Naive thymus-derived CD4-positive, alpha-beta T cell (primary cell): ENCODE measurements at regions of chr4 and their contacts with region 1.

Region 1: GRCh38 chr4:83252782-83253405 is 31.7 kb downstream of the COQ2 start:
- DNase-seq: peak; percentile 36 to 85 (median 79)
- ATAC-seq: peak; percentile 90
- H3K4me3 ChIP-seq: no peak overlapping the region
- H3K4me3 Mint-ChIP-seq: no peak overlapping the region
- H3K27ac ChIP-seq: no peak overlapping the region
- H3K27ac Mint-ChIP-seq: peak overlapping the region in 8 of 9 donors; percentile 8 to 88 (median 72)
- H3K4me1 ChIP-seq: peaks cover 10 to 12% of the 10 kb centered on the region in 2 donors
- H3K4me1 Mint-ChIP-seq: peaks cover 19 to 36% (median 26%) of the 10 kb centered on the region in 7 donors
- H3K27me3 ChIP-seq: no peaks in the 10 kb centered on the region
- H3K27me3 Mint-ChIP-seq: peaks cover 0 to 5% (median 0%) of the 10 kb centered on the region in 5 donors

Region 2: GRCh38 chr4:82398263-82398662 is 854.6 kb before region 1 on chr4:
- CTCF ChIA-PET with region 1: no interaction called
- POLR2A ChIA-PET with region 1: no interaction called
- intact Hi-C with region 1: no loop called
- DNase-seq: no peak
- ATAC-seq: no peak
- H3K4me3 ChIP-seq: no peak overlapping the region
- H3K4me3 Mint-ChIP-seq: no peak overlapping the region
- H3K27ac ChIP-seq: no peak overlapping the region
- H3K27ac Mint-ChIP-seq: no peak overlapping the region
- H3K4me1 ChIP-seq: no peaks in the 10 kb centered on the region
- H3K4me1 Mint-ChIP-seq: peaks cover 0 to 3% (median 0%) of the 10 kb centered on the region in 7 donors
- H3K27me3 ChIP-seq: no peaks in the 10 kb centered on the region
- H3K27me3 Mint-ChIP-seq: peaks cover 0 to 23% (median 4%) of the 10 kb centered on the region in 5 donors

Region 3: DNA sequence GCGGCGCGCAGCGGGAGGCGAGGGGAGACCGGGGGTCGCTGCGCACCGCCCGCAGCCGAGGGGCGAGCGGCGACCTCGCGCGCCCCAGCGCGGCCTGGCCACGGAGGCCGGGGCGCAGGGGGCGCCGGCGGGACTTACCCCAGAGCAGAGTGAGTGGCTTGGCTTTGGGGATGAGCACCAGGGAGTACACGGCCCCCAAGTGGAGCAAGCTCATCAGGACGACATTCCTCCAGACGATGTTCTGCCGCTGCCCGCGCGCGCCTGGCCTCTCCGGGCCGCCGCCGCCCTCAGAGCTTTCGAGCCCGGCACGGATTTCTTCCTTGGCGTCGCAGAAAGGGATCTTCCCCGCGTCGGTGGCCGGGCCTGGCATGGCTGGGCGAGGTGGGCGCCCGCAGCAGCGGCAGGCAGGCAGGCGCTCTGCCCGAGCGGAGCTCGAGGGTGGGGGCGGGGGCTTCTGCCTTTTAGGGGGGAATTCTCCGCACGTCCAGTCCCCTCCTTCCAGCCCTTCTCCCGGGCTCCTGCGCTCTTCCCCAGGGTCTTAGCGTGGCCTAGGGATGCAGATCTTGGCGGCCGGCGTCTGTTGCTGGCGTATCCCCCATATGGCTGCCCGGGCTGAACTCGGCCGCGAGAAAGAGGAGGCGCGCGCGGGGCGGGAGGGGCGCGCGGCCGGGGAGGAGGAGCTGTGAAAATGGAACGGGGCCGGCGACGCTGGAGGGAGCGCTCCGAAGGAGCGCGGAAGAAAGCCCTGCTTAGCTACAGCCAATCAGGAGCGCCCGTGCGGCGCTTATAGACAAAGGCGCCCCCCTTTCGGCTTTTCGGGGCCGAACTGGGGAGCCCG is 454.5 kb before region 1 on chr4 and contains the start of gene SCD5:
- CTCF ChIA-PET with region 1: no interaction called
- POLR2A ChIA-PET with region 1: no interaction called
- intact Hi-C with region 1: no loop called
- DNase-seq: peak in 4 of 9 donors; percentile 4 to 52 (median 20)
- ATAC-seq: peak; percentile 90
- H3K4me3 ChIP-seq: peak within 1 kb of the TSS; percentile 50
- H3K4me3 Mint-ChIP-seq: peak within 1 kb of the TSS; percentile 72 to 92 (median 84)
- H3K27ac ChIP-seq: no peak within 1 kb of the TSS
- H3K27ac Mint-ChIP-seq: peak within 1 kb of the TSS in 1 of 9 donors; percentile 23
- H3K4me1 ChIP-seq: peaks cover 0 to 11% of the 10 kb centered on the region in 2 donors
- H3K4me1 Mint-ChIP-seq: peaks cover 13 to 25% (median 20%) of the 10 kb centered on the region in 7 donors
- H3K27me3 ChIP-seq: peaks cover 0 to 7% of the 10 kb centered on the region in 2 donors
- H3K27me3 Mint-ChIP-seq: peaks cover 38 to 78% (median 53%) of the 10 kb centered on the region in 5 donors
- total RNA-seq, gene SCD5: 0.13 to 1.5 (median 0.44) TPM in 3 of 5 experiments, not detected in the others

Region 4: DNA sequence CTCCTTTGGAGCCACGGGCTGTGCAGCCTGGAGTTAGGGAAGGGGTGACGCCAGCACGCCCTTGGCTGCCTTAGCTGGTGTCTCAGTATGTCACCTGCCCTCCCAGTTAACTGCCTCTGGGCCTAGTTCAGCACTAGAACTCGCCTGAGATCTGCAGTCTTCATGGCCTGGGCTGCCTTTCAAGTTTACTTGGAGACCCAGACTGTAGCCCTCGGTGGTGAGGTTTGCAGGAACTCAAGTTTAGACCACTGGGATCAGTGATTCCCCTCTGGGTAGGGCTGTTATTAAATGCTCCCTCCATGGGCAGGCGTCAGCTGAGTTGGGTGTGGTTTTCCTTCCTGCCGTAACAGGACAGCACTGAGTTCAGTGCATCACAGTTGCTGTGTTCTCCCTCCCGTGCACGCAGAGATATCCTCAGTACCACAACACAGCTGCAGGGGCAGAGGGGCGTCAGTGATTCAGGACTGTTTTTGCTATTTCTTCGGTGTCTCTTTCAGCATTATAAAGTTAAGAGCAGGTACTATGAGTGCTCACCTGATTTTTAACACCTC is 168.9 kb before region 1 on chr4:
- CTCF ChIA-PET with region 1: interaction called, 4 read pairs
- POLR2A ChIA-PET with region 1: interaction called, 12 read pairs
- intact Hi-C with region 1: loop called in 1 of 2 experiments (anchors 2 kb)
- DNase-seq: peak; percentile 36 to 86 (median 77)
- ATAC-seq: peak; percentile 98
- H3K4me3 ChIP-seq: no peak overlapping the region
- H3K4me3 Mint-ChIP-seq: peak overlapping the region; percentile 43 to 74 (median 62)
- H3K27ac ChIP-seq: peak overlapping the region; percentile 70
- H3K27ac Mint-ChIP-seq: peak overlapping the region; percentile 88 to 99 (median 94)
- H3K4me1 ChIP-seq: peaks cover 12 to 29% of the 10 kb centered on the region in 2 donors
- H3K4me1 Mint-ChIP-seq: peaks cover 25 to 55% (median 43%) of the 10 kb centered on the region in 7 donors
- H3K27me3 ChIP-seq: no peaks in the 10 kb centered on the region
- H3K27me3 Mint-ChIP-seq: no peaks in the 10 kb centered on the region

Region 5: DNA sequence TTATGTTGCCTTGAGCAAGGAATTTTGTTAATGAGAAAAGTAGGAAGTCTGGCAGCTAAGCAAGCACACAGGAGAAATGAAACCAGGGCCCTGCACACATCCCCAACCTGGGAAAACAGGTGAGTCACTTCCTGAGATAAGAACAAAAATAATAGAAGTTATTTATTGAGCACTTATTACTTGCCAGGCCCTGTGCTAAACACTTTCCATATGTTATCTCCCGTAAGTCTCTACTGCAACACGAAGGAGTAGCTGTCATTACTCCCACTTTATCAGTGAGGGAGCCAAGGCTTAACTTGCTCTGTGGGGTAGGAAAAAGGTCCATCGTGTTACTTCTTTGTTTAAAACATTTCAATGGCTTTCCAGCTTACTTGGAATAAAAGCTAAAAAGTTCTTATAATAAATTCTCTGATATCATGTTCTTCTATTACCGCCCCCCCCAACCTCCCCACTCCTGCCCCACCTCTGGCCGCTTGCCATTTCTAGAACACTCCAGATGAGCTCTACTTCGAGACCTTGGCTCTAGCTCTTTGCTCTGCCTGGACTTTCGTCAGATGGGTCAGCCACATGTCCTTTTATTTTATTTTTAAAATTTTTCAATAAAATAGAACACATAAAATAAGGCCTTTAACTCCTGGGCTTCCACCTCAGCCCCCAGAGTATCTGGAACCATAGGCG is 102.1 kb before region 1 on chr4:
- CTCF ChIA-PET with region 1: interaction called, 3 read pairs
- POLR2A ChIA-PET with region 1: interaction called, 4 read pairs
- intact Hi-C with region 1: loop called in 1 of 2 experiments (anchors 2 kb)
- DNase-seq: no peak
- ATAC-seq: no peak
- H3K4me3 ChIP-seq: no peak overlapping the region
- H3K4me3 Mint-ChIP-seq: no peak overlapping the region
- H3K27ac ChIP-seq: no peak overlapping the region
- H3K27ac Mint-ChIP-seq: no peak overlapping the region
- H3K4me1 ChIP-seq: peaks cover 0 to 10% of the 10 kb centered on the region in 2 donors
- H3K4me1 Mint-ChIP-seq: peaks cover 9 to 44% (median 30%) of the 10 kb centered on the region in 7 donors
- H3K27me3 ChIP-seq: no peaks in the 10 kb centered on the region
- H3K27me3 Mint-ChIP-seq: peaks cover 0 to 17% (median 0%) of the 10 kb centered on the region in 5 donors

Region 6: GRCh38 chr4:83212041-83212851 is 40.6 kb before region 1 on chr4:
- CTCF ChIA-PET with region 1: interaction called, 15 read pairs
- POLR2A ChIA-PET with region 1: interaction called, 18 read pairs
- intact Hi-C with region 1: loop called (anchors 1 kb)
- DNase-seq: peak in 7 of 9 donors; percentile 72 to 96 (median 90)
- ATAC-seq: peak; percentile 95
- H3K4me3 ChIP-seq: peak overlapping the region; percentile 38
- H3K4me3 Mint-ChIP-seq: peak overlapping the region; percentile 49 to 90 (median 68)
- H3K27ac ChIP-seq: peak overlapping the region; percentile 67
- H3K27ac Mint-ChIP-seq: peak overlapping the region; percentile 83 to 99 (median 92)
- H3K4me1 ChIP-seq: peaks cover 67 to 69% of the 10 kb centered on the region in 2 donors
- H3K4me1 Mint-ChIP-seq: peaks cover 55 to 84% (median 79%) of the 10 kb centered on the region in 7 donors
- H3K27me3 ChIP-seq: no peaks in the 10 kb centered on the region
- H3K27me3 Mint-ChIP-seq: peaks cover 0 to 17% (median 0%) of the 10 kb centered on the region in 5 donors

Region 7: GRCh38 chr4:83231620-83232076 is 21.2 kb before region 1 on chr4:
- CTCF ChIA-PET with region 1: interaction called, 3 read pairs
- POLR2A ChIA-PET with region 1: no interaction called
- intact Hi-C with region 1: loop called (anchors 1 to 2 kb)
- DNase-seq: no peak
- ATAC-seq: peak; percentile 78
- H3K4me3 ChIP-seq: no peak overlapping the region
- H3K4me3 Mint-ChIP-seq: peak overlapping the region in 7 of 10 donors; percentile 13 to 60 (median 45)
- H3K27ac ChIP-seq: no peak overlapping the region
- H3K27ac Mint-ChIP-seq: peak overlapping the region; percentile 50 to 86 (median 72)
- H3K4me1 ChIP-seq: peaks cover 29 to 34% of the 10 kb centered on the region in 2 donors
- H3K4me1 Mint-ChIP-seq: peaks cover 44 to 62% (median 49%) of the 10 kb centered on the region in 7 donors
- H3K27me3 ChIP-seq: no peaks in the 10 kb centered on the region
- H3K27me3 Mint-ChIP-seq: peaks cover 0 to 32% (median 0%) of the 10 kb centered on the region in 5 donors

Region 8: GRCh38 chr4:83237591-83237990 is 15.3 kb before region 1 on chr4:
- CTCF ChIA-PET with region 1: interaction called, 6 read pairs
- POLR2A ChIA-PET with region 1: interaction called, 4 read pairs
- intact Hi-C with region 1: loop called (anchors 1 to 2 kb)
- DNase-seq: no peak
- ATAC-seq: no peak
- H3K4me3 ChIP-seq: no peak overlapping the region
- H3K4me3 Mint-ChIP-seq: no peak overlapping the region
- H3K27ac ChIP-seq: no peak overlapping the region
- H3K27ac Mint-ChIP-seq: peak overlapping the region in 1 of 9 donors; percentile 32
- H3K4me1 ChIP-seq: peaks cover 22 to 29% of the 10 kb centered on the region in 2 donors
- H3K4me1 Mint-ChIP-seq: peaks cover 40 to 70% (median 63%) of the 10 kb centered on the region in 7 donors
- H3K27me3 ChIP-seq: no peaks in the 10 kb centered on the region
- H3K27me3 Mint-ChIP-seq: peaks cover 0 to 57% (median 0%) of the 10 kb centered on the region in 5 donors

Region 9: DNA sequence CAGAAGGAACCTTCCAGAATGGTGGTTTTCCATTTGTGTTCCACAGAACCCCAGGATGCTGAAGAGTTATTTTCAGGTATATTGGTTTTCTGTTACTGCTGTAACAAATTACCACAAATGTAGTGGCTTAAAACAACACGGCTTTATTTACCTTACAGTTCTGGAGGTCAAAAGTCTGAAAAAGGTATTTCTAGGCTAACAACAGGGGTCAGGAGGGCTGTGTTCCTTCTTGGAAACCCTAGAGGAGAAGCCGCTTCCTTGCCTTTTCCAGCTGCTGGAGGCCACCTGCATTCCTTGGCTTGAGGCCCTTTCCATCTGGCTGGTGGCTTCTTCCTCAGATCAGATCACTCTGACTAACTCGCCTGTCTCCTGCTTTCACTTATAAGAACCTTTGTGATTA is 139.7 kb after region 1 on chr4:
- CTCF ChIA-PET with region 1: no interaction called
- POLR2A ChIA-PET with region 1: no interaction called
- intact Hi-C with region 1: no loop called
- DNase-seq: no peak
- ATAC-seq: no peak
- H3K4me3 ChIP-seq: no peak overlapping the region
- H3K4me3 Mint-ChIP-seq: no peak overlapping the region
- H3K27ac ChIP-seq: no peak overlapping the region
- H3K27ac Mint-ChIP-seq: no peak overlapping the region
- H3K4me1 ChIP-seq: peaks cover 0 to 11% of the 10 kb centered on the region in 2 donors
- H3K4me1 Mint-ChIP-seq: peaks cover 0 to 14% (median 10%) of the 10 kb centered on the region in 7 donors
- H3K27me3 ChIP-seq: no peaks in the 10 kb centered on the region
- H3K27me3 Mint-ChIP-seq: peaks cover 0 to 9% (median 0%) of the 10 kb centered on the region in 5 donors

Region 10: GRCh38 chr4:83780053-83780728 is 527.3 kb after region 1 on chr4:
- CTCF ChIA-PET with region 1: no interaction called
- POLR2A ChIA-PET with region 1: no interaction called
- intact Hi-C with region 1: no loop called
- DNase-seq: no peak
- ATAC-seq: no peak
- H3K4me3 ChIP-seq: no peak overlapping the region
- H3K4me3 Mint-ChIP-seq: no peak overlapping the region
- H3K27ac ChIP-seq: no peak overlapping the region
- H3K27ac Mint-ChIP-seq: no peak overlapping the region
- H3K4me1 ChIP-seq: no peaks in the 10 kb centered on the region
- H3K4me1 Mint-ChIP-seq: no peaks in the 10 kb centered on the region
- H3K27me3 ChIP-seq: no peaks in the 10 kb centered on the region
- H3K27me3 Mint-ChIP-seq: peaks cover 0 to 24% (median 13%) of the 10 kb centered on the region in 5 donors